ENCODE measurements at regions of chr9 and their contacts with region 1.

Region 1: GRCh38 chr9:97921959-97922724 is at the start of gene TRMO:
- DNase-seq: peak; percentile 99
- ATAC-seq: peak; percentile 78
- H3K4me3 Mint-ChIP-seq: peak within 1 kb of the TSS; percentile 82
- H3K27ac Mint-ChIP-seq: peak within 1 kb of the TSS; percentile 99
- H3K4me1 Mint-ChIP-seq: peaks cover 36% of the 10 kb centered on the region
- H3K27me3 Mint-ChIP-seq: no peaks in the 10 kb centered on the region
- total RNA-seq, gene TRMO: 13.9 to 20.7 TPM

Region 2: DNA sequence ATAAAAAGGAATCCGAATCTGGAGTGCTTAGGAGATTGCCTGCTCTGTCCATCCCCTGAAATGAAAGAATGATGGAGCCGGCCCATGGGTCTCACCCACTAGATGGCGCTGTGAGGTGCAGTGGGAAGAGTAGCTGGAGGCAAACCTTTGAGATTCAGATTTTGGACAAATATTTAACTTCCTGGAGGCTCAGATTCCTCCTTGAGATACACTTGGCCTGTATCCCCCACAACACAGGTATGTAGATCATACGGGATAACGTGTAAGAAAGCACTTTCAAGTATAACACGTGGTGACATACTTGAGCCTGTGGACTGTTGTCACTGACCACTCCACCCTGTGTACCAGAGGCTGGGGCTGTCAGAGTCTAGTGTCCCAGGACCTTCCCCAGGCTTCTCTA is 32.1 kb before region 1 on chr9:
- CTCF ChIA-PET with region 1: interaction called, 15 read pairs
- POLR2A ChIA-PET with region 1: no interaction called
- intact Hi-C with region 1: no loop called
- DNase-seq: peak; percentile 86
- ATAC-seq: peak; percentile 75
- H3K4me3 Mint-ChIP-seq: no peak overlapping the region
- H3K27ac Mint-ChIP-seq: no peak overlapping the region
- H3K4me1 Mint-ChIP-seq: peaks cover 7% of the 10 kb centered on the region
- H3K27me3 Mint-ChIP-seq: no peaks in the 10 kb centered on the region

Region 3: DNA sequence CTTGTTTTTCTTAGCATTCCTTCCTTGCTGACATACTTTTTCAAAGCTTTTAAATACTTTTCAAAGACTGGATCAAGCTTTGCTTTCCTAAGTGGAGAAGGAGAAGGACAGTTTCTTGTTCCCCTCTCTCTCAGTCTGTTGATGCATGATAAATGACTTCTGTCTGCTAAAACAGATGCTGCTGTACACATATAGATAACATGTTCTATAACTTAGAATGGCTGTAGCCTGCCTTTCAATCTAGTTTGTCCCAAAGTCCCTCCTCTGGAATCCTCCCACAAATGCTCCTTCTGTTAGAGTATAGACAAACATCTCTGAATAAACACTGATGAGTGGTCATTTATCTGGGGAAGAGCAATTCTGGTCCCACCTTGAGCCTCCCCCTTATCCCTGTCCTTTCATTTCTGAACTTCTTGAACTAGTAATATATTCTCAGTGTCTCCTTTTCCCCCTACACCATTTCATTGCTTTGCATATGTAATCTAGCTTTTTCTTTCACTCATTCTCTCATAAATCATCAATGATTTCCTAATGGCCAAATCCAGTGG is 21.2 kb after region 1 on chr9:
- CTCF ChIA-PET with region 1: interaction called, 64 read pairs
- POLR2A ChIA-PET with region 1: interaction called, 3 read pairs
- intact Hi-C with region 1: no loop called
- DNase-seq: no peak
- ATAC-seq: no peak
- H3K4me3 Mint-ChIP-seq: no peak overlapping the region
- H3K27ac Mint-ChIP-seq: no peak overlapping the region
- H3K4me1 Mint-ChIP-seq: peaks cover 5% of the 10 kb centered on the region
- H3K27me3 Mint-ChIP-seq: no peaks in the 10 kb centered on the region

Region 4: GRCh38 chr9:98045234-98046179 is 123.4 kb after region 1 on chr9:
- CTCF ChIA-PET with region 1: interaction called, 11 read pairs
- POLR2A ChIA-PET with region 1: interaction called, 5 read pairs
- intact Hi-C with region 1: loop called in 1 of 2 experiments (anchors 1 kb)
- DNase-seq: peak; percentile 52
- ATAC-seq: peak; percentile 96
- H3K4me3 Mint-ChIP-seq: peak overlapping the region; percentile 84
- H3K27ac Mint-ChIP-seq: peak overlapping the region; percentile 95
- H3K4me1 Mint-ChIP-seq: peaks cover 31% of the 10 kb centered on the region
- H3K27me3 Mint-ChIP-seq: no peaks in the 10 kb centered on the region

Region 5: DNA sequence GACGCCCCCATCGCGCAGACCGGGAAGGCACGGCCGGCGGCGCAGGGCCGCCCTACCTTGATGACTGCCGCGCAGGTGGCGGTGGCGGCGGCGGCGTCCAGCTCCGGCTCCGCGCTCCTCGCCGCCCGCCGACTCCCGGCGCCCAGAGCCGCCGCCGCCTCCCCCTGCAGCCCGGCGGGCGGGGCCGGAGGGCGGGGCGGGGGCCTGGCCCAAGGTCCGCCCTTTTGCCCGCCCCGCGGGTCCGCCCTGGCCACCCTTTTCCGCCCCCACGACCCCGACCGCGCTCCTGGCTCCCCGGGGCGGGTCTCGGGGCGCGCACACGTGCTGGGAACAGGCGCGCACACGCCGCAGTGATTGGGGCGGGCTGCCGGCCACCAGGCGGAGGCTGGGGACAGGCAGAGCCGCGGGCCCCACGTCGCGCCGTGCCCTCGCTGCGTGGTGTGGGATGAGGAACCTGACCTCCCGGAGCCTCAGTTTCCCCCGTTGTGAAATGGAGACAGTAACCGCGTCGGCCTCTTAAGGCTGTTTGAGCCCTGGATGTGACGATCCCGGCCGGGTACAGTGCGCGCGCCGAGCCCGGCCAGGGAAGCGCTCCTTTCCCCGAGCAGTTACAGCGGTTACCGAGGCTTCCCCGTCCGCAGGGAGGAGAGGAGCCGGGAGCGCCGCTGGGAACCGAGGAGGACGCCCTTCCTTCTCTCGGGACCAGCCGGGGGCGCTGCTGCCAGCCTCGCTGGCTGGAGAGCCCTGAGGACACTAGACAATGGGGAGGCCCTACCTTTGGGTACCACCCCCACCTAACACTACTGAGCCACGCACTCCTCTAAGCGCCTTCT is 270.6 kb after region 1 on chr9 and contains the start of gene CORO2A:
- CTCF ChIA-PET with region 1: no interaction called
- POLR2A ChIA-PET with region 1: no interaction called
- intact Hi-C with region 1: loop called in 1 of 2 experiments (anchors 5 kb)
- DNase-seq: peak; percentile 83
- ATAC-seq: peak; percentile 78
- H3K4me3 Mint-ChIP-seq: peak within 1 kb of the TSS; percentile 78
- H3K27ac Mint-ChIP-seq: peak within 1 kb of the TSS; percentile 65
- H3K4me1 Mint-ChIP-seq: peaks cover 26% of the 10 kb centered on the region
- H3K27me3 Mint-ChIP-seq: no peaks in the 10 kb centered on the region
- total RNA-seq, gene CORO2A: 9.7 to 10.3 TPM

Region 6: GRCh38 chr9:98796364-98797101 is 874.4 kb after region 1 on chr9 and contains the start of gene ANKS6:
- CTCF ChIA-PET with region 1: no interaction called
- POLR2A ChIA-PET with region 1: no interaction called
- intact Hi-C with region 1: loop called in 1 of 2 experiments (anchors 10 kb)
- DNase-seq: peak; percentile 90
- ATAC-seq: peak; percentile 90
- H3K4me3 Mint-ChIP-seq: peak within 1 kb of the TSS; percentile 77
- H3K27ac Mint-ChIP-seq: peak within 1 kb of the TSS; percentile 81
- H3K4me1 Mint-ChIP-seq: peaks cover 25% of the 10 kb centered on the region
- H3K27me3 Mint-ChIP-seq: no peaks in the 10 kb centered on the region
- total RNA-seq, gene ANKS6: 15.8 to 17.4 TPM

Measured in activated CD4-positive, alpha-beta T cell treated with anti-CD3 and anti-CD28 coated beads for 36 hours (primary cell).